HEK293 (cell line): ENCODE measurements at regions of chr10 and their contacts with region 1.

Region 1: GRCh38 chr10:100743626-100744135 is 1.7 kb upstream of the PAX2 start:
- H3K4me3 ChIP-seq: peak overlapping the region; percentile 3; the same call in 1 of the 2 replicates
- H3K27ac ChIP-seq: peak overlapping the region; percentile 67; the same call in 1 of the 2 replicates
- H3K4me1 ChIP-seq: peaks cover 2% of the 10 kb centered on the region; the same call in 1 of the 2 replicates
- CTCF ChIP-seq: peak; percentile 83

Region 2: DNA sequence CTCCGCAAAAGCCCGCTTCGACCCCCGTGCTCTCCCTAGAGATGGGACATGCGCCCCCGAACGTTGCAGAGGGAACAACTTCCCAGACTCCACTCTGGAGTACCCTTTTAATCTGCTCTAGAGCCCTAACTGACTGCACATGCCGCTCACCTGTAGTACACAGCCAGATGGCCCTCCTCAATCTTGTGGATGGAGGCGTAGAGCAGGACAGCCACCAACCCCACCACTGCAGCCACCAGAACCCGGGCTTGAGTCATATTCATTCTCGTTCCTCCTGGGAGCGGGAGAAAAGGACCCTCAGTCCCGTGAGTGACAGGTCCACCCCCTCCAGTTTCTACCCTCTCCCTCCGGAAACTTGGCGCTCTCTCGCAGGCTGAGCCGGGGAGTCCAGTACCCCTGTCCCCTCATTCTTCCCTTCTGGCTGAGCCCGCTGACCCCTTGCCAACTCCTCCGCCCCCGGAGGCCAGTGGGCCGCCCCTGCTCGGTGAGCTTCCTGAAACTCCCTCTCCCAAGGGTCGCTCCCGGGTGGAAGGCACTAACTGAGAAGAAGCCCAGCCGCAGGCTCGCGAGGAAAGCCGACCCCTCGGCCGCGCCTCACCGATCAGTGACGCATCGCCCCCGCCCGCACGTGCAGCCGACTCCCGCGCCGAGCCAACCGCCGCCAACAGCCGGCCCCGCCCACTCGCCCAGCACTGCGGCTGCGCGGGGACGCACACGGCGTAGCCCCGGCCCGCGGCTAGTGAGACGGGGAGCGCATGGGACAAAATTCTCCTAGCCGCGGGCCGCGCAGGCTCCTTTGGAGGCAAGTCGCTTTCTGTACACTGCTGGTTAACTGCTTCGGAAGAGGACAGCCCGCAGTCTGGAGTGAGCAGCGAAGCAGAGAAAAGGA is 558.1 kb before region 1 on chr10 and contains the start of gene ERLIN1:
- CTCF ChIA-PET with region 1: no interaction called
- POLR2A ChIA-PET with region 1: no interaction called
- H3K4me3 ChIP-seq: peak within 1 kb of the TSS; percentile 76
- H3K27ac ChIP-seq: peak within 1 kb of the TSS; percentile 69
- H3K4me1 ChIP-seq: no peaks in the 10 kb centered on the region
- CTCF ChIP-seq: no peak

Region 3: DNA sequence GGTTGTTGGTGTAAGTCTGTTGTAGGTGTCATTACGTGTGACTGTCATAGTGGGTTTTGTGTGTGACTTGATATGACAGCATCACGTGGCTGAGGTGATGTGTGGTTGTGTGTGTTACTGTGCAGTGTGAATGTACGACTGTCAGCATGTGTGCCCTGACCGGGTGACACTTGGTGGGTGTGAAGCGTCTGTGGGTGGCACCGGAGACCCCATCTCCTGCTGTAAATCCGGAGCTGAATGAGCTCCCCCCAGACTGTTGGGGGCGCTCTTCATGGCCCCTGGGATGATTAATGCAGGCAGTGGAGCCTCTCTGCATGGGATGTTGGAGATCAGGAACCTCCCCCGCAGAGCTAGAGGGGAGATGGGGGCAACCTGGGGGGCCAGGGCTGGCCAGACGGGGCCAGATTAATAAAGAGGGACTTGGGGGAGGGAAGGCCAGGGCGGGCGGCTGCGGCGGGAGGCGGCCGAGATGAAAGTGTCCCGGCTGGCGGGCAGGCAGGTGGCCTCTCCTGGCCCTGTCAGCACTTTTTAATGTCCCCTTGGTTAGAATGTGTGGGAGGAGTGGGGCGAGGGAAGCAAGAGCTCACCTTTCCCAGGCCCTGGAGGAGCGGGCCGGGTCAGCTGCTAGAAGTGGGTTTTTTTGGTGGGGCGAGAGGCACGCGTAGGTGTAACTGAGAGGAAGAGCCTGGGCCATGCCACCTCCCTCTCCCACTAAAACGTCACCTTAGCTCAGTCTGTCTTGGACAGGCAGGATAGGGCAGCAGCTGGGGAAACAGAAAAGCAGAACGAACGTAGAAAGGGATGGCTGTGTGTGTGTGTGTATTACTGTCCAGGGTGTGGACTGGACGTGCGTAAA is 173.8 kb before region 1 on chr10:
- CTCF ChIA-PET with region 1: interaction called, 144 read pairs
- POLR2A ChIA-PET with region 1: no interaction called
- H3K4me3 ChIP-seq: peak overlapping the region; percentile 49
- H3K27ac ChIP-seq: no peak overlapping the region
- H3K4me1 ChIP-seq: no peaks in the 10 kb centered on the region
- CTCF ChIP-seq: 0 out of 2 replicates have a peak, but pooled peaks have one; percentile 37

Region 4: DNA sequence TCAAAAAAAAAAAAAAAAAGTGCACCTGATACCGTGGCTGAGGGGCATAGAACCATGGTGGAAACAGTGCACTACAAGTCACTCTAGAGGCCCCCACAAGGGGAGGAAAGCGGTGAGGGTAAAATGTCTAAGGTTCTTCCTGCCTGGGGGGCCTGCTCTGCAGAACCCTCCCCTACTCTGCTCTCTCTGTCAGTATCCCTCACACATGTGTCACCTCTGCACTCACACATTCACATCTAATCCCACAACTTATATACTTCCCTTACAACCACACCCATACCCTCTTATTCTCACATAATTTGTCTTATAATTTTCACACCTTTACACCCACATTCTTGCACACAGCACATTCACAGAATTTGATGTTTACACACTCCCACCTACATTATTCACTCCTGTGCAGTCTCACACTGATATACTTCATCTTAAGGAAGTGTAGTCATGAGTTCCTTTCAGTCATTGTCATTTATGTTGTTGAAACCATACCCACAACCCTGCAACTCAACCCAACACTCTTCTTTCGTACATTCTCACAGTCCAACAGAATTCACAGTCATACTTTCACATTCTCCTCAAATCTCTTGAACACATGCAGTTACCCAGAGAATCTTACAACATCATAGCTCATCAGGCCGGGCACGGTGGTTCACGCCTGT is 66.3 kb before region 1 on chr10:
- CTCF ChIA-PET with region 1: interaction called, 30 read pairs
- POLR2A ChIA-PET with region 1: no interaction called
- H3K4me3 ChIP-seq: no peak overlapping the region
- H3K27ac ChIP-seq: no peak overlapping the region
- H3K4me1 ChIP-seq: 0 out of 2 replicates have a peak, but pooled peaks cover 2% of the 10 kb centered on the region
- CTCF ChIP-seq: no peak

Region 5: GRCh38 chr10:100728928-100729861 is 14.5 kb before region 1 on chr10:
- CTCF ChIA-PET with region 1: interaction called, 37 read pairs
- POLR2A ChIA-PET with region 1: interaction called, 4 read pairs
- H3K4me3 ChIP-seq: peak overlapping the region; percentile 23
- H3K27ac ChIP-seq: no peak overlapping the region
- H3K4me1 ChIP-seq: peaks cover 5% of the 10 kb centered on the region; the same call in 1 of the 2 replicates
- CTCF ChIP-seq: peak; percentile 81

Region 6: GRCh38 chr10:100872034-100872791 is 128.5 kb after region 1 on chr10:
- CTCF ChIA-PET with region 1: interaction called, 49 read pairs
- POLR2A ChIA-PET with region 1: no interaction called
- H3K4me3 ChIP-seq: no peak overlapping the region
- H3K27ac ChIP-seq: no peak overlapping the region
- H3K4me1 ChIP-seq: no peaks in the 10 kb centered on the region
- CTCF ChIP-seq: peak; percentile 85